Panc1 (cell line): ENCODE measurements at regions of chr12 and their contacts with region 1.

Region 1: DNA sequence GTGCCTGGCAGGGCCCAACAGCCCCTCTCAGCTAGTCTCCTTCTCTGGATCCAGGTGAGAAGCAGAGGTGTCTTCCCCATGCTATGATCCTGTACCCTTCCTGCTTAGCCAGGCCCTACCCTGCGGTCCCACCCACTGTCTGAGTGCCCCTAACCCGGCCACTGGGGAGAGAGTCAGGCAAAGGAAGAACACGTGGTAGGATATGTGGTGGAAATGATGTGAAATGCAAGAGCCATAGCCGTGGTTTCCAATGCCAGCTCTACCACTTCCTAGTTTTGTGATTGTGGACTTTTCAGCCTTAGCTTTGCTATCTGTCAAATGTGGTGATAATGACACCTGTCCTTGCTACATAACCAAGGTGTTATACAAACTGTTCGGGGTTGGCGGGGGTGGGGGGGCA is 15.8 kb downstream of the KRT2 start:
- DNase-seq: no peak
- ATAC-seq: no peak
- H3K4me3 ChIP-seq: no peak overlapping the region
- H3K27ac ChIP-seq: no peak overlapping the region
- H3K4me1 ChIP-seq: no peaks in the 10 kb centered on the region
- H3K27me3 ChIP-seq: peaks cover 12% of the 10 kb centered on the region
- CTCF ChIP-seq: no peak

Region 2: GRCh38 chr12:52486166-52487105 is 149.8 kb before region 1 on chr12:
- CTCF ChIA-PET with region 1: no interaction called
- POLR2A ChIA-PET with region 1: interaction called, 24 read pairs
- in situ Hi-C with region 1: no loop called
- intact Hi-C with region 1: no loop called
- DNase-seq: no peak
- ATAC-seq: no peak
- H3K4me3 ChIP-seq: no peak overlapping the region
- H3K27ac ChIP-seq: no peak overlapping the region
- H3K4me1 ChIP-seq: no peaks in the 10 kb centered on the region
- H3K27me3 ChIP-seq: peaks cover 13% of the 10 kb centered on the region
- CTCF ChIP-seq: no peak

Region 3: GRCh38 chr12:52608161-52608830 is 27.9 kb before region 1 on chr12:
- CTCF ChIA-PET with region 1: interaction called, 11 read pairs
- POLR2A ChIA-PET with region 1: no interaction called
- in situ Hi-C with region 1: no loop called
- intact Hi-C with region 1: no loop called
- DNase-seq: no peak
- ATAC-seq: no peak
- H3K4me3 ChIP-seq: no peak overlapping the region
- H3K27ac ChIP-seq: no peak overlapping the region
- H3K4me1 ChIP-seq: no peaks in the 10 kb centered on the region
- H3K27me3 ChIP-seq: peaks cover 8% of the 10 kb centered on the region
- CTCF ChIP-seq: no peak